Activated T-helper 1 cell treated with anti-CD3 and anti-CD28 coated beads, Interleukin-12 subunit alpha, Interleukin-12 subunit beta, Interleukin-2, Interleukin-4 antibody, amounts not matched to agents 30 ng/mL and 10 ng/mL and 1 ng/mL, durations not matched to agents 14 hours and 24 hours and 36 hours (primary cell): ENCODE measurements at regions of chr16 and their contacts with region 1.

Region 1: GRCh38 chr16:73058221-73058615 is 10.3 kb upstream of the ZFHX3 start:
- DNase-seq: peak; percentile 17
- H3K4me3 Mint-ChIP-seq: no peak overlapping the region
- H3K27ac Mint-ChIP-seq: no peak overlapping the region
- H3K4me1 Mint-ChIP-seq: peaks cover 20% of the 10 kb centered on the region
- H3K27me3 Mint-ChIP-seq: peaks cover 39% of the 10 kb centered on the region

Region 2: DNA sequence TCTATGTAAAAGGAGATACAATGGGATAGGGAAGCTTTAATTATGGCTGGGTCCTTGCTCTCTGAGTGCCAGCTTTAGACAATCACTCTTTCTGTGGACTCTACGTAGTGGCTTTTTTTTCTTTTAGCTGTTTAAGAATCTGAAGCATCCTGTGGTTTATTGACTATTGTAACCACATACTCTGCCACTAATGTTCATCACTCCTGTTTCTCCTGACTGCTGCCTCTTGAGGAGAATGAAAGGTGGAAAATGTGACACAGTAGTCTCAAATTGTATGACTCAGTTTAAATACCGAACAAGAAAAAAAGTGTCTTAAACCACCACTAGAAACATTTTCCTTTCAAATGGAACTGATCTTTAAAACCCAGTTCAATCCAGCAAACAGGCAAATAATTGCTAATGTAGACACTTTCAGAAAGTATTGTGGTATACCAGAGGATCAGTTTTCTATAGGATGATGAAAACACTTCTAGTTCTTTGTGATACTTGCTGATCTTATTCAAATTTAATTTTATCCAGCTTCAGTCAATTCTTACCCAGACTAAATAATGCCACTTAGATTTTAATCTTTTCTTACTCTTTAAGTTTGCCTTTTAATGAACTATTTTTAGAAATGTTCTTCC is 583.6 kb before region 1 on chr16:
- intact Hi-C with region 1: loop called (anchors 10 kb)
- DNase-seq: no peak
- H3K4me3 Mint-ChIP-seq: no peak overlapping the region
- H3K27ac Mint-ChIP-seq: peak overlapping the region; percentile 46
- H3K4me1 Mint-ChIP-seq: peaks cover 20% of the 10 kb centered on the region
- H3K27me3 Mint-ChIP-seq: no peaks in the 10 kb centered on the region

Region 3: DNA sequence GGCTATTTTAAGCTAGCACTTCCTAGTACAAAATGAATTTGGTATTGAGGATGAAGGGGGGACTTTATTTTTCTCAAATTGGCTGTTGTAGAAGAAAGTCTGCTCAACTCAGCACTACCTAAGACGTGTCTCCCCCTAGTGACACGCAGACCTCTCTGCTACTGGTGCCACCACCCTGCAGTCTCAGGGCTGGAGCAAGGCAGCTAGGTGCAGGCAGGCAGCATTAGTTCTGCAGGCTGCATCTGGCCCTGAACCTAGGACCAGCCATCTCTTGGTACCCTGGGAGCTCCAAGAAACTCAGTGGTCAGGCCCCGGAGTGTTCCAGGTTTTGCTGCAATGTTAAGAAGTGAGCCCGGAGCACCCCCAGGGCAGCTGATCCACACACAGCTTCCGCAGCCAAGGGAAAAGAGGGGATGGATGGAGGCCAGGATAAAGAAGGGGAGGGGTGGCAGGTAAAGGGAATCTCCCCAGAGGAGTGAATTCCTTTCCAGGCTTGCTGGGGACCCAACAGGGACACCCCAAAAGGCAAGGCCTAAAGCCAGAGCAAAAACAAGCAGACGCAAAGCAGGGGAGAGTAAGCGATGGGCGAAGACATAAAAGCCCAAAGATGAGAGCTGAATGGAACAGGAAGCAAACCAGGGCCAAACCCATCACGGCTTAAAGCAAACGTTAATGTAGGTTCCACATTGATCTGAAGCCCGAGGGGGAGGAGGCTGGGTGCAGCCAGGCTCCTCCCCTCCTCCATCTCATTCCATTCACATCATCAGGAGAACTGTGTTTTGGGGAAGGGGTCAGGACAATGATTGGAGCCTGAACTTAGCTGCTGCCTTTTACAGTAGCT is 210.8 kb before region 1 on chr16:
- intact Hi-C with region 1: loop called (anchors 10 kb)
- DNase-seq: no peak
- H3K4me3 Mint-ChIP-seq: no peak overlapping the region
- H3K27ac Mint-ChIP-seq: no peak overlapping the region
- H3K4me1 Mint-ChIP-seq: peaks cover 25% of the 10 kb centered on the region
- H3K27me3 Mint-ChIP-seq: peaks cover 12% of the 10 kb centered on the region

Region 4: DNA sequence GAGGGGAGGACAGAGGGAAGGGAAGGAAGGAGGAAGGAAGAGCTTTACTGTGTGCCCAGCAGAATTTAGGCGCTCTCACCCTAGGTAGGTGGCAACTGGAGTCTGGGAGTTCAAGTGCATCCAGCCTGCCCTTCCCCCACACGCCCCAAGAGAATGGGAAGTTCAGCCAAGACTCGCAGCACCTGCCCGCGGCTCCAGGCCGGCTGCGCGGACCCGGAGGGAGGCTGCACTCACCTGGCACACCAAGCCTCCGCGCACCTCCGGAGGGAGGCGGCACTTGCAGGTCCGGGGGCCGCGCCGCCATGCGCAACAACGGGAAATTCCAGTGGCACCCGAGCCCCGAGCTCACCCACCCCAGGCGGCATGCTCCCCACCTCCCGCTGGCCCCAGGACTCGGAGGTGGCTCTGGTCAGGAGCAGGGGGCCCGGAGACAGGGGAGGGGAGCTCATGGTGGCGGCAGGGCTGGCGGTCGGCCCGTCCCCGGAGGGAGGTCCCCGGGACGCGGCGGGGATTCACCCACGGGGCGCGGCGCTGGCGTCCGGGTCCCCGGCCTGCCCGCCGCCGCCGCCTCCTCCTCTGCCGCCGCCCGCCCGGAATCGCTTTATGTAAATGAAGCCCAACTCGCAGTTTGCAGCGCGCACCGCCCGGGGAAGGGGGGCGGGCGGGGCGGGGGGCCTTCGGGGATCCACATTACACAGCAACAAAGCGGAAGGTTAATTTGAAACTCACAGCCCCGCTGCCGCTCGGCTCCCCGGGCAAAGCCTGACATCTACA is 10.5 kb before region 1 on chr16 and contains the start of gene ZFHX3:
- intact Hi-C with region 1: loop called (anchors 1 kb)
- DNase-seq: peak; percentile 12
- H3K4me3 Mint-ChIP-seq: peak within 1 kb of the TSS; percentile 75
- H3K27ac Mint-ChIP-seq: no peak within 1 kb of the TSS
- H3K4me1 Mint-ChIP-seq: no peaks in the 10 kb centered on the region
- H3K27me3 Mint-ChIP-seq: peaks cover 39% of the 10 kb centered on the region
- total RNA-seq, gene ZFHX3: 0.34 TPM in 2 replicates